Panc1 (cell line): ENCODE measurements at regions of chr5 and their contacts with region 1.

Region 1: GRCh38 chr5:5886812-5887486 is 464.5 kb downstream of the ICE1 start:
- DNase-seq: no peak
- ATAC-seq: peak; percentile 92
- H3K4me3 ChIP-seq: no peak overlapping the region
- H3K27ac ChIP-seq: no peak overlapping the region
- H3K4me1 ChIP-seq: no peaks in the 10 kb centered on the region
- H3K27me3 ChIP-seq: no peaks in the 10 kb centered on the region
- CTCF ChIP-seq: peak; percentile 95

Region 2: DNA sequence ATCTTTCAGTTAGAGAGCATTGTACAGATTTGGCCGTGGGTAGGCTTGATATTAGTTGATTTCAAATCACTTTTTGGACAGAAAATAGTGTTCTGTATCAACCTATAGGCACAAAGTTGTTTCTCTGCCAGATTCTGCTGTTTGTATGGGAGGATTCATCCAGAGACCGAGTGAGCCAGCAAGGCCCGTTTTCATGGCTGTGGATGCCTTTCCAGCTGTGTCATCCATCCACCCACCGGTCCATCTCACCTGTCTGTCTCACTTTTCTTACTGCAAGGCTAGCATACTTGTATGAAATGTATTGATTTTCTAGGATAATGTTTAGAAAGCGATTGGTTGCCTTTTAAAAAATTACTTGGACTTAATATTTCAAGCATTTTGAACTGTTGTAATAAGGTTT is 430.1 kb before region 1 on chr5:
- CTCF ChIA-PET with region 1: no interaction called
- POLR2A ChIA-PET with region 1: no interaction called
- in situ Hi-C with region 1: no loop called
- intact Hi-C with region 1: no loop called
- DNase-seq: no peak
- ATAC-seq: no peak
- H3K4me3 ChIP-seq: no peak overlapping the region
- H3K27ac ChIP-seq: no peak overlapping the region
- H3K4me1 ChIP-seq: no peaks in the 10 kb centered on the region
- H3K27me3 ChIP-seq: no peaks in the 10 kb centered on the region
- CTCF ChIP-seq: no peak

Region 3: GRCh38 chr5:5492087-5492933 is 394.6 kb before region 1 on chr5:
- CTCF ChIA-PET with region 1: no interaction called
- POLR2A ChIA-PET with region 1: no interaction called
- in situ Hi-C with region 1: no loop called
- intact Hi-C with region 1: loop called (anchors 5 kb)
- DNase-seq: peak; percentile 41
- ATAC-seq: peak; percentile 72; the same call in 1 of the 2 replicates
- H3K4me3 ChIP-seq: no peak overlapping the region
- H3K27ac ChIP-seq: no peak overlapping the region
- H3K4me1 ChIP-seq: no peaks in the 10 kb centered on the region
- H3K27me3 ChIP-seq: peaks cover 5% of the 10 kb centered on the region
- CTCF ChIP-seq: peak; percentile 89

Region 4: GRCh38 chr5:6317113-6317798 is 430.3 kb after region 1 on chr5:
- CTCF ChIA-PET with region 1: no interaction called
- POLR2A ChIA-PET with region 1: no interaction called
- in situ Hi-C with region 1: no loop called
- intact Hi-C with region 1: no loop called
- DNase-seq: no peak
- ATAC-seq: no peak
- H3K4me3 ChIP-seq: no peak overlapping the region
- H3K27ac ChIP-seq: no peak overlapping the region
- H3K4me1 ChIP-seq: no peaks in the 10 kb centered on the region
- H3K27me3 ChIP-seq: peaks cover 2% of the 10 kb centered on the region; the same call in 1 of the 2 replicates
- CTCF ChIP-seq: no peak